ENCODE measurements at regions of chr6 and their contacts with region 1.

Region 1: DNA sequence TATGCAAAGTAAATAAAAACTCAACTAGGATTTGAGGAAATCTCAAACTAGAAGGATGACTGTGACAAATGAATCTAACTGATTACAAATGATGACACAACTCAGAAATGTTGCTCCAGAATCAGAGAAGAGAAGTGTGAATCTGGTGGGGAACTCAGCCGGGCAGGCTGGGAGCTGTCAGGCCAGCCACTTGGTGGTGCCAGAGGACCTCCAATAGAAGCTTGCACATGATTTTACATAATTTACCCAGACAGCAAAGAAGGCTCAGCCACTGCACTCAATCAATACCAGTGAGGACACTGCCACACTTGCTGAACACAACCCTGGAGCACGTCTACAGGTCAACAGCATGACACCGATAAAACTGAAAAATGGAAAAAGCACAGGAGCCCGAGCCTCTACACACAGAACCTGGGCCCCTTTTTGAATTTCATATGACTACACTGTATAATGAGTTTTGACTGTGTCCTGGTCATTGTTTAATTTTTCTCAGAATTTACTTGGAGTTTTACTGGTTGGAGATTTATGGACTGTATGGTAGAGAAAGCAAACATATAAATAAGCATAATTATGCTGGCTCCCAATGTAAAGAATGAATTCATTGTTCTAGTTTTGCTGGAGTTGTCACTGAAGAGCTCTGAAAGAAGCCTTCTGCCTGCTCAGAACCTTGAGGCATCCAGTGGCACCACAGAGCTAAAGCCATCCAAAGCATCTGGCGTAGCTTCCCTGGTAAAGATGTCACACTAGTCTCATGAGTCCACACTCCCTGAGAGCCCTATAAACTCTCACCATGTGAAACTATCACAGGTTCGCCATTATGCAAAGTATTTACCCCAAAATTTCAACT is 296.5 kb downstream of the THBS2 start:
- DNase-seq: peak; percentile 78
- H3K4me3 ChIP-seq: no peak overlapping the region
- H3K27ac ChIP-seq: no peak overlapping the region
- H3K4me1 ChIP-seq: peaks cover 5% of the 10 kb centered on the region
- H3K27me3 ChIP-seq: peaks cover 21% of the 10 kb centered on the region
- CTCF ChIP-seq: peak; percentile 91

Region 2: DNA sequence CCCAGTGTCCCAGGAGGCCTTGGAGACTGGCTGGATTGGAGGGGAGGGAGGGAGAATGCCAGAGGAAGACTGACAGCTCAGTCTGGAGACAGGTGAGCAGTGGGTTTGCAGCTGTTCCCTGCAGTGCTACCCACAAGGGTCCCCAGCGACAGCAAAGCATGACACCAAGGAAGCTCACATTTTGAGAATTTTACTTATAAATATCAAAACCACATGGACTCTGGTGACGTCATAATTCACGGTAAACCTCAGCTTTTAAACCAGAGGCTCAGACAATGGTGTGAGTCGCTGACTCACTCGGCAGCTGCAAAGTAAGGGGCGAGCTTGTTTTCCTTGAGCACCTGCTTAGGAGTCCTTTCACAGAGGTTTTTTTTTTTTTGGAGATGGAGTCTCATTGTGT is 231.4 kb after region 1 on chr6:
- CTCF ChIA-PET with region 1: no interaction called
- POLR2A ChIA-PET with region 1: no interaction called
- intact Hi-C with region 1: no loop called
- DNase-seq: peak; percentile 8
- H3K4me3 ChIP-seq: no peak overlapping the region
- H3K27ac ChIP-seq: no peak overlapping the region
- H3K4me1 ChIP-seq: no peaks in the 10 kb centered on the region
- H3K27me3 ChIP-seq: no peaks in the 10 kb centered on the region
- CTCF ChIP-seq: no peak

Region 3: DNA sequence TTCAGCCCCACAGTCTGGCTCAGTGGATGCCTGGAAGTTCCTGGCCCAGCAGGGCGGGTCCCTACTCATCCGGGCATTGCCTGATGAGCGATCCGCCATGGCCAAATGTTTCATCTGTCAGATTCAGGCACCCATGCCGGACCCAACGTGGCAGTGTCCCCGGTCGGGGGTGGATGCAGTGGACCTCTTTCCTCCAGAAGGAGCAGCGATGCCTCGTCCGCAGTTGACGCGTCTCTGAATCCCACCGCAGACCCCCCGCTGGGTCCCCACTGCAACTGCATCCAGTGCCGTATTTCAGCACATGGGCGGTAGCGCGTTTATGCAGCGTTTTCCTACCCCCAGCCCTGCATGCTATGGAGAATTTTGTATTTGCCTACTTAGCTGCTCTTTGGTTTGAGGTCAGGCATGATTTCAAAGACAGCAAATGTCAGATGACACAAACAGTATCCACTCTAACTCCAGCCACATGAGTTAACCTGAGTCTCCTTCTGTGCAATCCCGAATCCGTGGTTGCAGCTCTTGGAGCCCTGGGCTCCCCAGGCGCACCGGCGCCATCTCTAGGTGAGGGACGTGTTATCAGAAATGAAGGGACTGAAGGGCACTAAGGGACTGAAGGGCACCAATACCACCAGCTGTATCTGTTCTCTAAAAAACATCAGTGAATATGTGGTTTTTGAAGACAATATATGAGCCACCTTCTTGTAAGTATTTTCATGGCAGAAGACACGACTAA is 369.1 kb after region 1 on chr6:
- CTCF ChIA-PET with region 1: no interaction called
- POLR2A ChIA-PET with region 1: no interaction called
- intact Hi-C with region 1: loop called (anchors 5 kb)
- DNase-seq: peak; percentile 43
- H3K4me3 ChIP-seq: no peak overlapping the region
- H3K27ac ChIP-seq: no peak overlapping the region
- H3K4me1 ChIP-seq: no peaks in the 10 kb centered on the region
- H3K27me3 ChIP-seq: peaks cover 3% of the 10 kb centered on the region
- CTCF ChIP-seq: peak; percentile 44; the same call in 1 of the 2 replicates

Region 4: DNA sequence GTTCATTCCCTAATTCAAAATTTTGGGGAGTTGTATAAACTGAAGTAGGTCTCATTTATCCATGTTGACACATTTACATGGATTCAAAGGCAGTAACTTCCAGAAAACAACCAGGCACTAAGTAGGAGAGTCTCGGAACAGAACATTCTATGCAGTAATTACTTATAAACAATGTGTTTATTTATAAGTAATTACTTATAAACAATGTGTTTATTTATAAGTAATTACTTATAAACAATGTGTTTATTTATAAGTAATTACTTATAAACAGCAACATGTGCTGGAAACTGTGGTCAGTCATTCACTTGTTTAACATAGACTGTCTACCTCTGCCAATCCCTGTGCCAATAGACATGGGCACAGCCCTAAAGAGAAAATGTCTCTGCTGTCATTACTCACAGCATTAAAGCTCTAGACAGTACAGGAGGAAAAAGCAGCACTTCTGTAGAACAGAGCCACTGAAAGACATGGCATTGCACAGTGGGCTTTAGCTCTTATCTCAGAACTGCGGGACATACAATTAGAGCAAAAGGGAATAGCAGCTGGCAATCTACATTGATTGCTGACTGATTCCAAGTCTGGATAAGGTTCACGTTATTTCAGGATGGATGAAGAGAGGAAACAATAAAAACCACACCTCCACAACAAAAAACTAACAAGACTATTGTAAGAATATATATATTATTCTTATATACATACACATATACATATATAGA is 556.5 kb after region 1 on chr6:
- CTCF ChIA-PET with region 1: no interaction called
- POLR2A ChIA-PET with region 1: no interaction called
- intact Hi-C with region 1: loop called (anchors 10 kb)
- DNase-seq: no peak
- H3K4me3 ChIP-seq: no peak overlapping the region
- H3K27ac ChIP-seq: no peak overlapping the region
- H3K4me1 ChIP-seq: no peaks in the 10 kb centered on the region
- H3K27me3 ChIP-seq: no peaks in the 10 kb centered on the region
- CTCF ChIP-seq: no peak

Region 5: GRCh38 chr6:169640351-169640852 is 683.3 kb after region 1 on chr6:
- CTCF ChIA-PET with region 1: no interaction called
- POLR2A ChIA-PET with region 1: no interaction called
- intact Hi-C with region 1: loop called (anchors 10 kb)
- DNase-seq: no peak
- H3K4me3 ChIP-seq: no peak overlapping the region
- H3K27ac ChIP-seq: no peak overlapping the region
- H3K4me1 ChIP-seq: no peaks in the 10 kb centered on the region
- H3K27me3 ChIP-seq: no peaks in the 10 kb centered on the region
- CTCF ChIP-seq: no peak

Region 6: GRCh38 chr6:169701954-169702839 is 745.1 kb after region 1 on chr6 and contains the starts of genes C6orf120 and WDR27:
- CTCF ChIA-PET with region 1: no interaction called
- POLR2A ChIA-PET with region 1: no interaction called
- intact Hi-C with region 1: loop called (anchors 2 kb)
- DNase-seq: peak; percentile 98
- H3K4me3 ChIP-seq: peak within 1 kb of the TSS; percentile 92
- H3K27ac ChIP-seq: peak within 1 kb of the TSS; percentile 99
- H3K4me1 ChIP-seq: peaks cover 27% of the 10 kb centered on the region
- H3K27me3 ChIP-seq: no peaks in the 10 kb centered on the region
- CTCF ChIP-seq: no peak
- total RNA-seq, gene C6orf120: 23.2 and 25.9 TPM in 2 replicates
- total RNA-seq, gene WDR27: 77.3 and 89.1 TPM in 2 replicates

Region 7: GRCh38 chr6:170516783-170517616 is 1559.9 kb after region 1 on chr6:
- CTCF ChIA-PET with region 1: no interaction called
- POLR2A ChIA-PET with region 1: no interaction called
- intact Hi-C with region 1: loop called (anchors 5 kb)
- DNase-seq: peak; percentile 76
- H3K4me3 ChIP-seq: no peak overlapping the region
- H3K27ac ChIP-seq: no peak overlapping the region
- H3K4me1 ChIP-seq: no peaks in the 10 kb centered on the region
- H3K27me3 ChIP-seq: no peaks in the 10 kb centered on the region
- CTCF ChIP-seq: peak; percentile 84

Measured in A673 (cell line).